ENCODE measurements at regions of chr20 and their contacts with region 1.

Region 1: DNA sequence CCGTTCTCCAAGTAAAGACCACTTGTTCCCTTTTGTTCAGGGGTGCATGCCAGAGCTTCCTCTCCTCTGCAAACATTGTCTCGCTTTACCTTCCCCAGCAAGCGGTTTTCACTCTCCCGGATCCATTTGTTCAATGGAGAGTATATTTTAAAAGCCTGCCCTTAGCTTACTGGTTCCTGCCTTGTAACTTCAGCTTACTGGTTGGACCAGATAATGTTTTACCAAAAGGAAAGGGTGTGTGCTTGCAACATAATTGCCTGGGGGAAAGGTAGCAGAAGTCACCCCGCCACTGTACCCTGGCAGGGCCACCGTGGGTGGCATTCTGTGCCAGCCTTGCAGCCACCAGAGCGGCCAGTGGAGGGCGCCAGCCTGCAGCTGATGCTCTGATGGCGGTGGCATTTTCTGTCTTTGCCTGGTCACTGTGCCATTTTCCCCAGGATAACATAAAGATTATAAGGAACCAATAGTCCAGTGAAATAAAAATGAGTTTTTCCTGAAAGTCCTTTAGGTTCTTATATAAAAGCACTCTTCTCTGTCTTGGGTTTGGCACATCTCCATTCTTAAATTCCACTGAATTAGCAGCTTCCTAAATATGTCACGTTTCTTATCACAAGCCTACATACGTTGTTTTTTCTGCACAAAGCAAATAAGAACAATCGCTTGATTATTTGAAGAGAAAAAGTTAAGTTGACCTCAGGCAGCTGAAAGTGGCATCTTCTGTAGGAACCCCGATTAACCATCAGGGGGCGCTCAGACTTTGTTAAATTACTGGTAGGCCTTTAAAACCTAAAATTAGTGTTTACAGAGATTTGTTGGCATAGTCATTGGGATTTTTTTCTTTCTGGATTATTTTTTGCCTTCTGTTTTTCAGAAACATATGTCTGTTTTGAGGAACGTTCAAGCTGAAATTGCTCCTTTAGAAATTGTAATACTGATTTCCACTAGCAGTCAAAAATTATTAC is 67.4 kb upstream of the XRN2 start:
- DNase-seq: peak; percentile 89
- H3K4me3 Mint-ChIP-seq: no peak overlapping the region
- H3K27ac Mint-ChIP-seq: no peak overlapping the region
- H3K4me1 Mint-ChIP-seq: peaks cover 2% of the 10 kb centered on the region
- H3K27me3 Mint-ChIP-seq: no peaks in the 10 kb centered on the region

Region 2: DNA sequence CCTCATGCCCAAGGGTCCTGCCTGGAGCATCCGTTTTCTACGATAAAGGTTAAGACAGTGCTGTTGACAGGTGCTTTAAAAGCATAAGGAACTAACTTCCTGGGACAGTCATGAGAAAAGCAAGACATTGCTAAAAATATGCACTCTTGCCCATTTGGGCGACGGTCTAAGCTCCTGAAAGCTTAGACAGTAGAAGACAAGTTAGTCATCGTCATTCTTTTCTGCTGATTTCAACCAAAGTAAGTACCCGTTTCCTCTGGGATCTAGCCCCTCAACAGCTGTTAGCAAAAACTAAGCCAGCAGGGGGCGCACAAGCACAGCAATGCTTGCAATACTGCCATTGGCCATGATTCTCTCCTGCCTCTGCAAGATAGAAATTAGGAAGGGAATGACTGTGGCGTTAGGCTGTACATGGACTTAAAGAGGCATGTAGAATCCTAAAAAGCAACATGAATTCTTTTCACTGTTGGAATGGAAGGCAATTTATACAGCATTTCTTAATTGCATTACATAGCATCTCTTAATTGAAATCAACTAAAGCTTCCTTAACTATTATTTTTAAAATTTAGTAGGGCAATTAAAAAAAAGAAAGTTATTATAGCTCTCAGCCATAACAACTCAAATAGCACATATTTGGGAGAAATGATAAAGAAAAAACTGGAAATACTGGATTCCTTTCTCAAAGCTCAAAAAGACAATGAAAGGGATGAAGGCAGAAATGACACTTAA is 375.5 kb before region 1 on chr20:
- intact Hi-C with region 1: loop called (anchors 1 kb)
- DNase-seq: peak; percentile 95
- H3K4me3 Mint-ChIP-seq: no peak overlapping the region
- H3K27ac Mint-ChIP-seq: no peak overlapping the region
- H3K4me1 Mint-ChIP-seq: no peaks in the 10 kb centered on the region
- H3K27me3 Mint-ChIP-seq: peaks cover 9% of the 10 kb centered on the region

Region 3: DNA sequence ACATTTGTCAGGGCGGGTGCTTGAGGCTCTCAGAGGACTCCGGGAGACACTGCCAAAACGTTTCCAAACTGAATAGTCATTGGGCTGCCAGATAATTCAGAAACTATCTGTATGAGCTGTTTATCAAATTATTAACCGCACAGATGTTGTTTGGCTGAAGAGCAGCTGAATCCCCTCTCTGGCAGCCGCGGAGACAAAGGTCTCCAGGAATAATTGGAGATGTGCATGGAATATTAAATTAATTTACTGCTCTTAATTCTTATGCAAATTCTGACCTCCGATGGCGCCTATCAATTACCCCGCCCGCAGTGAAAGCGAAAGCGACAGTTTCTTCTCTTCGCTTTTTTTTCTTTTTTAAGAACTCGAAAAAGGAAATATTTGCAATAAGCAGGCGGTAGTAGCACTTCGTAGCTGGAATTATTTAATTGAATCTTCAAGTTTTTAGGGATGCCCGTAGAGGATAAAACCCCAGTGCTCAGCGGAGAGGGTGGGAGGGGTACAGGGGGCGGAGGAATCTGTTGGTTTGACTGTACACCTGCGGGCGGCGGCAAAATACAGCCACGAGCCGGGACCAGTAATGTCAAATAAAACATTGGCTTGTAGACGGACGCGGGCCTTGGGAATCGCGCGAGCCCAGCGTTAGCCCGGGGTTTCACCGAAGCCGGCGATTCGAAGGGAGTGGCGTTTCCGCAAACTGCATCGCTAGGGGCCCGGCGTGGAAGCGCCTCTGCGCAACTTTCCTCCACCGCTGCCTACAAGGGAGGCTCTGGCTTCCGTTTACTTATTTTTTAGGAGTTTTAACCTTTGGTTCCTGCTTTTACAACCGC is 135.8 kb before region 1 on chr20:
- intact Hi-C with region 1: loop called (anchors 10 kb)
- DNase-seq: peak; percentile 87
- H3K4me3 Mint-ChIP-seq: peak overlapping the region; percentile 89
- H3K27ac Mint-ChIP-seq: peak overlapping the region; percentile 92
- H3K4me1 Mint-ChIP-seq: peaks cover 36% of the 10 kb centered on the region
- H3K27me3 Mint-ChIP-seq: peaks cover 79% of the 10 kb centered on the region